Sciatic nerve (tissue), 2 donors: ENCODE measurements at regions of chr7 and their contacts with region 1.

Region 1: DNA sequence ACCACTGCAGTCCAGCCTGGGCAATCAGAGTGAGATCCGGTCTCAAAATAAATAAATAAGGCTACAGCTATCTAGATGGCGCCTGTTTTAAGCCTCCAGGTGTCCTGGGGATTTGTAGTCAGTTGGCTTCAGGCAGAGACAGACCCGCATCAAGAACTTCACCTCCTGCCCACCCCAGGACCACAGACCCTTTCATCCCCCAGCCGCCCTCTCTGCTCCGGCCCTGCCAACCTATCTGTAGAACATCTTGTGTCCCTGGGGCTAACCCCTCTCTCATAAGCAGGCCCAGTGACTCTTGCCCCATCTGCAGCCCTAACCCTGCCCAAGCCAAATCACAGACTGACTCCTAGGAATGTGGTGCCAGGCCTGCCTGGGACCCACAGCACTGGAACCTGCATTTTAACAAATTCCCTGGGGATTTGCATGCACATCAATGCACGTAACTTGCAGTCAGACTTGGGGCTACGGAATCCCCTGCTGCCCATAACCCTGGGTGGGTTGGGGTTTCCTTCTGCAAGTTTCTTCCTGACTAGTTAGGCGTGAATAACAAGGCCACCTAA is 17.8 kb downstream of the PDIA4 start:
- DNase-seq: no peak
- ATAC-seq: no peak

Region 2: GRCh38 chr7:147106746-147107145 is 1903.8 kb before region 1 on chr7:
- intact Hi-C with region 1: loop called (anchors 10 kb)
- DNase-seq: no peak
- ATAC-seq: no peak

Region 3: GRCh38 chr7:149229526-149229925 is 219.0 kb after region 1 on chr7:
- intact Hi-C with region 1: no loop called
- DNase-seq: no peak
- ATAC-seq: no peak